Heart left ventricle (tissue), 16 donors: ENCODE measurements at regions of chr6 and their contacts with region 1.

Region 1: DNA sequence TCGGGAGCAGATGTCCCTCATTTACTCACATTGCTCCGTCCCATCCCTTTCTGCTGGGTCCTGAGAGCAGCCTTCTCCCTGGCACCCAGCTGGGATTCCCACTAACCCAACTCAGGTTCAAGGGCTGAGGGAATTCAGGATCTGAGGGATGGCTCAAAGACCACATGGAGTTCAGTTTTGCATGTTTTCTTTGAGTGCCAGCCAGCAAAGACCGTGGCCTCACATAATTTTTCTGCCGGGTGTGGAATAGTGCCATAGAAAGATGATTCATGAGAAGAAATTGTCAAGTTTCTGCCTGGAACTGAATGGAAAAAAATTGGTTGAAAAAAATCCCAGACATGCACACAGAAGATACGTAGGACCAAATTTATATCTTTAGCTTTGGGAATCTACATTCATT is 168.6 kb downstream of the CD83 start:
- DNase-seq: no peak
- ATAC-seq: peak in 3 of 4 donors; percentile 8 to 62 (median 58)
- H3K4me3 ChIP-seq: no peak overlapping the region
- H3K27ac ChIP-seq: peak overlapping the region in 3 of 12 donors; percentile 3 to 43 (median 42)
- H3K4me1 ChIP-seq: peaks cover 0 to 19% (median 4%) of the 10 kb centered on the region in 12 donors
- H3K27me3 ChIP-seq: no peaks in the 10 kb centered on the region
- CTCF ChIP-seq: no peak
- POLR2A ChIP-seq: no peak

Region 2: DNA sequence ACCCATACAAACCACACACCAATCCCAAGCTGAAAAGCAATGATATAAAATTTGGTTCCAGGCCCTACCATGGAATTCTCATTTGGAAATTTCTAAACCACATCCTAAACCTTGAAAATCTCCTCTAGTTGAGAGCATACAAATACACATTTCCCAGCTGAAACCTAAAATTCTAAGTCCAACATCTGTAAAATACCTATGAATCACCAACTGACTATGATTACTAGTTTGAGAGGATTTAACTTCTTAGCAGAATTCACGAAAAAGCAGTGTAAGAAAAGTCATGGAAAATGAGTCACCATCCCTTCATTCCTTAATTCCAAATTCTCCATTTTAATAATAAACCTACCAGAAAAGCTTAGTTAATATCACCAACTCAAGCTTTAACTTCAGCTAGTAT is 589.9 kb before region 1 on chr6:
- intact Hi-C with region 1: no loop called
- DNase-seq: no peak
- ATAC-seq: no peak
- H3K4me3 ChIP-seq: no peak overlapping the region
- H3K27ac ChIP-seq: peak overlapping the region in 1 of 12 donors; percentile 34
- H3K4me1 ChIP-seq: peaks cover 0 to 66% (median 29%) of the 10 kb centered on the region in 12 donors
- H3K27me3 ChIP-seq: no peaks in the 10 kb centered on the region
- CTCF ChIP-seq: no peak
- POLR2A ChIP-seq: no peak

Region 3: GRCh38 chr6:14354919-14355572 is 68.9 kb after region 1 on chr6:
- intact Hi-C with region 1: no loop called
- DNase-seq: peak; percentile 66 to 81 (median 75)
- ATAC-seq: peak in 3 of 4 donors; percentile 49 to 59 (median 52)
- H3K4me3 ChIP-seq: no peak overlapping the region
- H3K27ac ChIP-seq: no peak overlapping the region
- H3K4me1 ChIP-seq: peaks cover 0 to 11% (median 5%) of the 10 kb centered on the region in 12 donors
- H3K27me3 ChIP-seq: no peaks in the 10 kb centered on the region
- CTCF ChIP-seq: no peak
- POLR2A ChIP-seq: no peak

Region 4: DNA sequence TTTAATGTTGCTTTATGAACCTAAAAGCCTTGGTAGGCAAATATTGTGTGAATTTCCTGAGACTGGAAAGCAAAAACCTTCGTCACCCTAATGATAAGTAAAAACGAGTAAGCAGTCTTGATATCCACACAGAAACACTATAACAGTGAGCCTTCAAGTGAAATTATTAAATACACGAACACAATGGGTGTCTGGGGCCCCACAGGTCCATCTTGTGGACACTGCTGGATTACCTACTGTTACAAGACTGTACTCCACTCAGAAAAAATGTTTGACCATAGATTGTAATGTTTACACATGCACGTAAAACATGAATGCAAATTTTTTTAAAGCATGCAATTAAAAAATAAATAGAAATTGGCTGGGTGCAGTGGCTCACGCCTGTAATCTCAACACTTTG is 298.3 kb after region 1 on chr6:
- intact Hi-C with region 1: loop called in 1 of 10 experiments (anchors 10 kb)
- DNase-seq: no peak
- ATAC-seq: peak in 2 of 4 donors; percentile 36 to 58
- H3K4me3 ChIP-seq: no peak overlapping the region
- H3K27ac ChIP-seq: no peak overlapping the region
- H3K4me1 ChIP-seq: peaks cover 0 to 10% (median 0%) of the 10 kb centered on the region in 12 donors
- H3K27me3 ChIP-seq: no peaks in the 10 kb centered on the region
- CTCF ChIP-seq: peak in 10 of 12 donors; percentile 13 to 40 (median 22)
- POLR2A ChIP-seq: no peak